Colonic mucosa (tissue), 4 donors: ENCODE measurements at regions of chr18 and their contacts with region 1.

Region 1: DNA sequence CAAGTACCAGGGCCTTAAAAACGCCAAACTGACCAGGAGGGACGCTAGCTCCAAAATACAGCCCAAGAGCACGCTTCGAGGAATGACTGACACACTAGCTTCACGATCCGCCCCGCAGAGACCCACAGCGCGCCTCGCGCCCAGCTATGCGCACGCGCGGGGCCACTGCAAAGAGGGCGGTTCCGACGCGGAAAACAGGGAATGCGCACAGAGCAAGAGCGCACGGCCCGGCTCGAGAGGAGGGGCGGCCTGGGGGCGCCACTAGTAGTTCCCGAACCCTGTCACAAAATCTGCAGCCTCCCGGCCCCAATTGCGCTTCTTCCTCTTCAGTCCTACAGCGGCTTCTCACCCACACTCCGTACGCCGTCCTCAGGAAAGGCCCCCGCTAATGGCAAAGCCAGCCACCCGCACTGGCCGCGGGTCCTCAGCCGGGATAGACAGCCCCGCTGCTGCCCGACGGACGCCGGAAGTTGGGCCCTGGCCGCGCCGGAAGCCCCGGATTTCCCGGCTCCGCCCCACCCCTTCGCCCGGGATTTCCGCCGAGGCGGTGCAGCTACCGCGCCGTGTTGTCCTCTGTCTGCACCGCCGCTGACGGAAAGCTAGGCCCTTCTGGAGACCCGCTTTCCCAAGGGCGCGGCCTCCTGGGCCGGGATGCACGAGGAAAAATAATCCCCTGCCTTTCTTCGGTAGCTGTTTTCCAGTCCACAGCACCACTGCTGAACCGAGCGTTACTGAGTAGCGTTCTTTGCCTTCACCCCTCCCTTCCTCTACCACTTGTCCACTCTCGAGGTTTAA is at the start of gene HDHD2:
- DNase-seq: peak; percentile 87
- H3K4me3 ChIP-seq: peak within 1 kb of the TSS; percentile 72
- H3K27ac ChIP-seq: peak within 1 kb of the TSS; percentile 88
- H3K4me1 ChIP-seq: no peaks in the 10 kb centered on the region
- H3K27me3 ChIP-seq: no peaks in the 10 kb centered on the region
- CTCF ChIP-seq: no peak
- total RNA-seq, gene HDHD2: 24.5 to 33.4 TPM

Region 2: DNA sequence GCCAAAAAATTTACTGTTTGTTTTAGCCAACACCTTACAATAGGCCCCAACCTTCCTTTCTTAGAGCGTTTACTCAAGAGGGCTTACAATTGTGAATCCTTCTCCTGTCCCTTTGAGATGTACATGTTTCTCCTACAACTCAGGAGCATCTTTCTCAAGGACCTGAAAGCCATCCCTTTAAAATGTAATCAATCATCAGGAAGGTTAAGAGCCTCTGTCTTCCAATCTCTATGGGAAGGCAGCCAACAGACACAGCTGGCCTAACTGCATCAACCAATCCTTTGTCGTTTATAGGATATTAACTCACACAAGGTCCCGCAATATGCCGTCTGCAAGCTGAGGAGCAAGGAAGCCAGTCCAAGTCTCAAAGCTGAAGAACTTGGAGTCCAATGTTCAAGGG is 29.3 kb after region 1 on chr18:
- intact Hi-C with region 1: loop called (anchors 2 kb)
- DNase-seq: no peak
- H3K4me3 ChIP-seq: no peak overlapping the region
- H3K27ac ChIP-seq: no peak overlapping the region
- H3K4me1 ChIP-seq: peaks cover 2% of the 10 kb centered on the region
- H3K27me3 ChIP-seq: no peaks in the 10 kb centered on the region
- CTCF ChIP-seq: no peak

Region 3: DNA sequence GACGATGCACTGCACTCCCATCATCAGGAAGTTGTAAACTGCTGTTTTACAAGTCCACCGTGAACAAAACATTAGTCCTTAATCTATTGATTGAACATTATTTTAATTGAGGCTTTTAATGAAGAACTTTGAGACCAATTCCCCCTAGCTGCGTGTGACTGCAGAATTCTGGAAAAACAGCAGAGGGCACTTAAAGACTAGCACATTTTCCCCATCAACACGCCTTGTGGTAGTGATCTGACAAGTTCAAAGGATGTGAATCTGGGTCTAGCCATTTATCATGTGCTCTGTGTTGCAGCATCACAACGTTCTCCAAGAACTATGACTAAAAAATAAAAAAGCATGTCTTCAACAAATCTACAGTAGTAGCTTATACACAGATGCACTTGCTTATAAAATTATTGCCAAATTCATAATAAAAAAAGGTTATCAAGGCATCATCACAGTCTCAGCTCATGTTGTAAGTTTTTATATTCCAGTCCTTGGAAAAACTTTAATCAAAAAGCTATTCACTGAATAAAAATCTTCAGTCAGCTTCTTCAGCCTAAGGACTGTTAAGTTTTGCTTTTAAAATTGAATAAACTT is 65.4 kb after region 1 on chr18:
- intact Hi-C with region 1: no loop called
- DNase-seq: no peak
- H3K4me3 ChIP-seq: no peak overlapping the region
- H3K27ac ChIP-seq: no peak overlapping the region
- H3K4me1 ChIP-seq: no peaks in the 10 kb centered on the region
- H3K27me3 ChIP-seq: no peaks in the 10 kb centered on the region
- CTCF ChIP-seq: peak; percentile 18